Activated T-helper 1 cell treated with anti-CD3 and anti-CD28 coated beads, Interleukin-12 subunit alpha, Interleukin-12 subunit beta, Interleukin-2, Interleukin-4 antibody, amounts not matched to agents 30 ng/mL and 10 ng/mL and 1 ng/mL, durations not matched to agents 14 hours and 24 hours and 36 hours (primary cell): ENCODE measurements at regions of chr1 and their contacts with region 1.

Region 1: DNA sequence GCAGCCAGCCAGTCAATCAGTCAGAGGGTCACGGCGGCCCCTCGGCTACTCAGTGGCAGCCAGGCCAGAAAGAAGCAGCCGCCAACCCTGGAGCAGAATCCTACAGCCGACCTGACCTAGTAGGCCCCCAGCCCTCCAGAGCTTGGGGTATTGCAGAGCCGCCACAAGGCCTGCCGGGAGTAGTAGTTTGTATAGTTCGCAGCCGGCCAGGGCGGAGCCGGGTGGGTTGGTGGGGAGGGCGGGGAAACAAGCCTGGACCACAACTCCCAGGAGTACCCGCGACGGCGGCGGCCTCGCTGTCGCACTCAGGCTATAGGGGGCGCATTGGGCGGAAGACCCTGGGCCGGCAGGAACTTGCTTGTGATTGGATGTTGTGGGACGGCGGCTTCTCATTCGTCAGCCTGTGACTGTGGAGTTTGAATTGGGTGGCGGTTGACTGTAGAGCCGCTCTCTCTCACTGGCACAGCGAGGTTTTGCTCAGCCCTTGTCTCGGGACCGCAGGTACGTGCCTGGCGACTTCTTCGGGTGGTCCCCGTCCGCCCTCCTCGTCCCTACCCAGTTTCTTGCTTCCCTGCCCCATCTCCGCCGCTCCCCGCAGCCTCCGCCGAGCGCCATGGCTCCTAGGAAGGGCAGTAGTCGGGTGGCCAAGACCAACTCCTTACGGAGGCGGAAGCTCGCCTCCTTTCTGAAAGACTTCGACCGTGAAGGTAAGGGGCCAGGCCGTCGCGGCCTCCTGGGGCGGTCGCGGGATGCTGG is at the start of gene CDCA8:
- DNase-seq: peak; percentile 99
- H3K4me3 Mint-ChIP-seq: peak within 1 kb of the TSS; percentile 92
- H3K27ac Mint-ChIP-seq: peak within 1 kb of the TSS; percentile 91
- H3K4me1 Mint-ChIP-seq: peaks cover 50% of the 10 kb centered on the region
- H3K27me3 Mint-ChIP-seq: no peaks in the 10 kb centered on the region
- total RNA-seq, gene CDCA8: 33.5 and 37.2 TPM in 2 replicates

Region 2: DNA sequence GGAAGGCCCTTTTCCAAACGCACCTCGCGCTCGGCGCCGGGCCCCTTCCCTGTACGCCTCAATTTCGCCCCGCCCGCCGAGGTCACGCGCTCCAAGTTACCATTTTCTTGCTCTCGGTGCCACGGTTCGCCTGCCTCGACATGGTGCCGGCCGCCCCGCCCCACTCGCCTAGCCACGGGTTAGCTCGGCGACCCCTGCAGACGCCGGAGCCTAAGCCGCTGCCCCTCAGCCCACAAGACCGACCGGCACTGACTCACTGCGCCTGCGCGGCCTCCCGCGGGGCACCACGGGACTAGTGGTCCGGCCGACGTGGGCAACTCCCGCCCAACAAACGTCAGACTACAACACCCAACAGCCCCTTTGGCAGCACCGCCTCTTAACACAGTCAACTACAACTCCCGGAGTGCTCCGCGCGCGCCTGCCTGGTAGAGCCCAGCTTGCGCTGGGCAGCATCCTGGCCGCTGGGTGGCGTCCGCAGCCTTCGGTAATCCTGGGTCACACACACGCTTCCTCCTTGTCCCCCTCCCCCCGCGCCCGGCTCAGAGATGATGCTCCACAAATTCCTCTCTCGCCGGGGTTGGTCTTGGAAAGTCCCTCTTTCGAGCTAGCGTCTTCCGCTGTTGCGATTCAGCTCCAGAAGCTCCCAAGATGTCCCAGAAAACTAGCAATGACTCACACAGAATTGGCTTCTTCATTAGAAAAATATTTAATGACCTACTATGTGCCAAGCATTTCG is 1542.9 kb before region 1 on chr1 and contains the start of gene TRAPPC3:
- intact Hi-C with region 1: loop called (anchors 5 kb)
- DNase-seq: peak; percentile 99
- H3K4me3 Mint-ChIP-seq: peak within 1 kb of the TSS; percentile 92
- H3K27ac Mint-ChIP-seq: peak within 1 kb of the TSS; percentile 99
- H3K4me1 Mint-ChIP-seq: peaks cover 68% of the 10 kb centered on the region
- H3K27me3 Mint-ChIP-seq: no peaks in the 10 kb centered on the region
- total RNA-seq, gene TRAPPC3: 74.2 and 74.4 TPM in 2 replicates

Region 3: DNA sequence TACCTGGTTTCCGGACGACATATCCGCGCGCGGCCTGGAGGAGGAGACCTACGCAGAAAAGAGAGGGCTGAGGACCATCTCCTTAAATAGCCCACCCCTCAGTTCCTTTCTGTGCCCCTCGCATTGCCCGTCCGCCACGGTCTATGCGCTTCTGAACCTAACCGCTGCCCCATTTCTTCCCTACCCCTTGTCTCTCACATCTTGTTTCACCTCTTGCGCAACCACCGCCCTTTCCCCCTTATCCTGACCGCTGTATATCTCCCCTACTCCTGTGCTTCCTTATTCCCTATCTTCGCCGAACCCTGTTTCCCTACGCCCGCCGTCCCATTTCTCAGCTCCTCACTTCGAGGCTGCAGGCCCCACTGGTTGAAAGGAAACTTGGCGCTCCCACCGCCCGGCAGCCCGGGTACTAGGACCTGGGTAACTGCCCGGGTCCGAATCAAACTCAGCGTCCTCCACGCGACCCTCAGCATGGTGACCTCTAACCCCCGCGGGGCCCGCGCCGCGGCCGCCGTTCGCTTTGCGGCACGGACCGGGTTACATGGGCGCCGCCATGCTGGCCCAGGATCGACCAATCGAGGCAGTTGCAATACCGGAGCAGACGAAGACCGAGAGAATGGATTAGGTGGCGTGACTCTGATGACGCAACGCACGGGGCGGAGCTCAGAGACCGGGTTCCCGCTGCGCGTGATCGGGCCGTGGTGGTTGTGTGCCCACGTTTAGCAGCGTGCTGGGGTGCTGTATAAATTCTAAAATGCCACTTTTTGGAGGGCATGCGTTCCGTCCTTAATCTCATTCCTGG is 1228.3 kb before region 1 on chr1 and contains the start of gene MRPS15:
- intact Hi-C with region 1: loop called (anchors 10 kb)
- DNase-seq: peak; percentile 92
- H3K4me3 Mint-ChIP-seq: peak within 1 kb of the TSS; percentile 100
- H3K27ac Mint-ChIP-seq: peak within 1 kb of the TSS; percentile 97
- H3K4me1 Mint-ChIP-seq: peaks cover 63% of the 10 kb centered on the region
- H3K27me3 Mint-ChIP-seq: no peaks in the 10 kb centered on the region
- total RNA-seq, gene MRPS15: 118 and 121 TPM in 2 replicates

Region 4: DNA sequence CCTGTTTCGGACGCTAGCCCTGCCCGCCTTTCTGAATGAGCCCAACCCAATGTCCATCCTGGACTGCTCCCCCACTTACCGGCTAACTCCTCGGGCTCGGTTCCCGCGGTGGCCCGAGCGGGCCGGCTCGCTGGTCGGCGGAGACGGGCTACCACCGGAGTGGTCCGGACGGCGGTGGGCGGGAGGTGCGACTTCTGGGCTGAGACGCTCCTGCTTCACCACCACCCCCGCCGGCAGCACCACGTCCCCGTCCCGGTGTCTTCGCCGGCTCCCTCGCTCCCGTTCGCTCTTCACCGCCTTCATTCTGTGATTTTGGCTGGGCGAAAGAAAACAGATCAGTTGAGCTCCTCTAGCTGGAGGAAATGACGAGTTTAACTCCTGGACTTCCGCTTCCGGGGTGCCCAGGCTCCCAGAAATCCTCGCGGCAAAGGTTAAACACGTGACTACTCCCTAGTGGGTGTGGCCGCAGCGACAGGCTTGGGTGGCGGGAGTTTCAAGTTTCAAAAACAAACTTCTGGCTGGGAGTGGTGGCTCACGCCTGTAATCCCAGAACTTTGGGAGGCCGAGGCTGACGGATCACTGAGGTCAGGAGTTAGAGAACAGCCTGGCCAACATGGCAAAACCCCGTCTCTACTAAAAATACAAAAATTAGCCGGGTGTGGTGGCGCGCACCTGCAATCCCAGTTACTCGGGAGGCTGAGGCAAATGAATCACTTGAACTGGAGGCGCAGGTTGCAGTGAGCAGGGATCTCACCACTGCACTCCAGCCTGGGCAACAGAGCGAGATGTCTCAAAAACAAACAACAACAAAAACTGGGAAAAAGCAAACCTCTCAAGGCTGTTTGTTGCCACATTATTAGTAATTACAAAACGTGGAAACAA is 138.1 kb before region 1 on chr1 and contains the start of gene SNIP1:
- intact Hi-C with region 1: loop called (anchors 1 kb)
- DNase-seq: peak; percentile 89
- H3K4me3 Mint-ChIP-seq: peak within 1 kb of the TSS; percentile 98
- H3K27ac Mint-ChIP-seq: peak within 1 kb of the TSS; percentile 98
- H3K4me1 Mint-ChIP-seq: peaks cover 49% of the 10 kb centered on the region
- H3K27me3 Mint-ChIP-seq: no peaks in the 10 kb centered on the region
- total RNA-seq, gene SNIP1: 28.1 and 30.2 TPM in 2 replicates

Region 5: DNA sequence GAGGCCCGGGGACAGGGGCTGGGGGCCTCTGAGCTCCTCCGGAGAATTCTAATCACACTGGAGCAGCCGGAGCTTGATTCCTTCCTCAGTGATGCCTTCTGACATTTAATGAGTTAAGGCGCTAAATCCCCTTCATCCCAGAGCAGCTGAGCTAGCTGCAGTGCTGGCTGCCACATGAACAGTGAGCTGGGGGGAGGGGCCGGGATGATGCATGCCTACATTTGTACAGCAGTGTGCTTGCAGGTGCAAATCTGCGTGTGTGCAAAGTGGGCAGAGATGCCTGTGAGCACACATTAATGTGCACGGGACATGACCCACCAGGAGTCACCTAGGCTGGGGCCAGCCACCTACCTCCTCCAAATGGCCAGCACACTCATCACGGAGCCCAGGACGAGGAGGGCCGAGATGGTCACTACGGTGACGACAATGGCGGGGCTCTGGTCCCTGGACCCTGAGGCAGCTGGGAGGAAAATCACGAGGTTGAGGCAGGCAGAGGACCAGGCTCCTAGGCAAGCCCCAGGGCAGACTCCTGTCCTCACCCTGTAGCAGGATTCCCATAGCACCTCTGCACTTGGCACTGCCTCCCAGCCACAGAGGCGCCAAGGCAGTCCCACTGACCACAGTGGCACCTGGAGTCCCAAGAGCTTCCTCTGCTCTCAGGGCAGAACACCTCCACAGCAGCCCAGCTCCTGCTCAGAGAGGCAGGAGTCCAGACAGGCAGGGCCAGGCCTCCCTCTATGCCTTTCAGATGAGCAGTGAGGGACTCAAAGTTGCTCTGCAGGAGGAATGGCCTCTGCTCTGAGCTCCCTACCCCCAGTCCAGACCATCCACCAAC is 34.7 kb after region 1 on chr1:
- intact Hi-C with region 1: no loop called
- DNase-seq: no peak
- H3K4me3 Mint-ChIP-seq: no peak overlapping the region
- H3K27ac Mint-ChIP-seq: no peak overlapping the region
- H3K4me1 Mint-ChIP-seq: no peaks in the 10 kb centered on the region
- H3K27me3 Mint-ChIP-seq: peaks cover 22% of the 10 kb centered on the region

Region 6: DNA sequence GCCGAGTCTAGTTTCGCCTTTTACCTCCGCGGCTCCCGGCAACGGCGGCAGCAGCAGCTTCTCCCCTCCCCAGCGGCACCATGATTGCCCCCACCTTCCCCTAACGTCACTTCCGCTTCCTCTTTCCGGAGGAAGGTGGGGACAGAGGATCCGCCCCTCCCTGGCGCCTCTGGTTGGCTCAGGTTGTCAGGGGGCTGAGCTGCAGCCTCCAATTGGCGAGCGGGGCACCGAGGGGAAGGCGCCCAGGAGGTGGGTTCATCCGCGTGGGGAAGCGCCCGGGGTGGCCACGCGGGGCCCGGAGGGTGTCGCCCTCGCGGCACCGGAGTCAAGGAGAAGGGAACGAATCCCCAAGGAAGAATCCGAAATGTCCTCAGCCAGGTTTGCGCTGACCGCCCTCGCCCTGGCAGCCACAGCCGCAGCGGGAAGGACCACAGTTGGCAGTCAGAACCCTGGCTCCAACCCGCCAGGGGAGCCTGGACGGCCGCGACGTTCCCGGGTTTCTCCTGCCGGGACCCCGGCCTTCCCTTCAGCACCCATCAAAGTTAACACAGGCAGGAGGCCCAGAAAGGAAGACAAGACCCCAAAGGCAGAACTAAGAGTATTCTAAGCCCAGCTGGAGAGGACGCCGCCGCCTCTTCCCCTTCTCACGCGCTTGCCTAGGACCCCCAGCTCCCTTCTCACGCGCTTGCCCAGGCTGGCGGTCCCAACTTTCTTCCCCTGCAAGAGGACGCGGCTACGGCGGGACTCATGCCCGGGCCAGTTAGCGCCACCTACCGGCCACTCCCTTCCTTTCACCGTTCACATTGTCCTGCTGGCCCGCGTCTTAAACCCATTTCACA is 167.5 kb after region 1 on chr1 and contains the start of gene MTF1:
- intact Hi-C with region 1: loop called (anchors 1 kb)
- DNase-seq: peak; percentile 96
- H3K4me3 Mint-ChIP-seq: peak within 1 kb of the TSS; percentile 95
- H3K27ac Mint-ChIP-seq: peak within 1 kb of the TSS; percentile 99
- H3K4me1 Mint-ChIP-seq: peaks cover 31% of the 10 kb centered on the region
- H3K27me3 Mint-ChIP-seq: no peaks in the 10 kb centered on the region
- total RNA-seq, gene MTF1: 31.7 and 35.3 TPM in 2 replicates

Region 7: DNA sequence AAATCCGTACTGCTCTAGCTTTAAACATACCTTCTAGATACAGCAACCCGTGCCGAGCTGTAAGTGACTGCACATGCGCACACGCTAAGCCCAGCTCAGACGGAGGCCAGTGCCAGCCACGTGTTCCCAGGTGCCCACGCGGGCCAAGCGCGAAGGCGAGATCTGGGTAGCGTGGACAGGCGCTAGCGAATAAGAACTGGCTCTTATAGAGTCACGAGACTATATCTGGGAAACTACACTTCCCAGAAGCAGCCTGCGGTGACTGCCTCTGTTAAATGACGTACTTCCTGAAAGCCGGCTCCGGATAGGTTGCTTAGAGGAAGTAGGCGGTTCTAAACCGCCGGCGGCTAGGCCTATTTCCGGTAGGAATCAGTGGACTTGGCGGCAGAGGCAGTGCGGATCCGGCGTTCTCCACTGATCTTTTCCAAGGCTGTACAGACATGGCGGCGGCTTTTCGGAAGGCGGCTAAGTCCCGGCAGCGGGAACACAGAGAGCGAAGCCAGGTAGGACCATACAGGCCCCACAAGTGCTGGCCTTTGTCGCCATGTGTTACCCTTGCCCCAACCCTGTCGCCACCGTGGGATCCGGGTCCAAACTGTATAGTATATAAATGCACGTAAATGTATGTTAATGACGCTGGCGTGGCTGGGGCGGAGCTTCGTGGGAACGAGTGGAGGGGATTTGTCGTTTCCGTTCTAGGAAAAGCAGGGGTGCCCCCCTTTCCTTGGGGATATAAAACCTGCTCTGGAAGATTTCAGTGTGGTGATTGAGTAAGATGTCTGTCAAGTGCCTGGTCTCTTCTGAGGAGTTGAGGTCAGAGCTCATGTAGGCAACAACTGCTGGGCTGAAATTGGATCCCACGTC is 320.3 kb after region 1 on chr1 and contains the start of gene UTP11:
- intact Hi-C with region 1: loop called (anchors 1 kb)
- DNase-seq: peak; percentile 87
- H3K4me3 Mint-ChIP-seq: peak within 1 kb of the TSS; percentile 96
- H3K27ac Mint-ChIP-seq: peak within 1 kb of the TSS; percentile 93
- H3K4me1 Mint-ChIP-seq: peaks cover 54% of the 10 kb centered on the region
- H3K27me3 Mint-ChIP-seq: no peaks in the 10 kb centered on the region
- total RNA-seq, gene UTP11: 106 and 108 TPM in 2 replicates